ENCODE measurements at regions of chr9 and their contacts with region 1.

Region 1: GRCh38 chr9:35489313-35490154 is at the start of gene RUSC2:
- DNase-seq: peak; percentile 79
- H3K4me3 Mint-ChIP-seq: peak within 1 kb of the TSS; percentile 85
- H3K27ac Mint-ChIP-seq: no peak within 1 kb of the TSS
- H3K4me1 Mint-ChIP-seq: peaks cover 26% of the 10 kb centered on the region
- H3K27me3 Mint-ChIP-seq: no peaks in the 10 kb centered on the region
- total RNA-seq, gene RUSC2: 4.0 to 5.1 TPM

Region 2: GRCh38 chr9:35277628-35278359 is 211.7 kb before region 1 on chr9:
- CTCF ChIA-PET with region 1: no interaction called
- intact Hi-C with region 1: loop called (anchors 2 kb)
- DNase-seq: no peak
- H3K4me3 Mint-ChIP-seq: no peak overlapping the region
- H3K27ac Mint-ChIP-seq: no peak overlapping the region
- H3K4me1 Mint-ChIP-seq: peaks cover 30% of the 10 kb centered on the region
- H3K27me3 Mint-ChIP-seq: peaks cover 3% of the 10 kb centered on the region

Region 3: GRCh38 chr9:35385042-35385441 is 104.5 kb before region 1 on chr9:
- CTCF ChIA-PET with region 1: no interaction called
- intact Hi-C with region 1: no loop called
- DNase-seq: no peak
- H3K4me3 Mint-ChIP-seq: no peak overlapping the region
- H3K27ac Mint-ChIP-seq: no peak overlapping the region
- H3K4me1 Mint-ChIP-seq: no peaks in the 10 kb centered on the region
- H3K27me3 Mint-ChIP-seq: no peaks in the 10 kb centered on the region

Region 4: GRCh38 chr9:35553670-35554543 is 64.4 kb after region 1 on chr9:
- CTCF ChIA-PET with region 1: interaction called, 12 read pairs
- intact Hi-C with region 1: loop called (anchors 1 kb)
- DNase-seq: peak; percentile 71
- H3K4me3 Mint-ChIP-seq: no peak overlapping the region
- H3K27ac Mint-ChIP-seq: no peak overlapping the region
- H3K4me1 Mint-ChIP-seq: no peaks in the 10 kb centered on the region
- H3K27me3 Mint-ChIP-seq: no peaks in the 10 kb centered on the region

Region 5: DNA sequence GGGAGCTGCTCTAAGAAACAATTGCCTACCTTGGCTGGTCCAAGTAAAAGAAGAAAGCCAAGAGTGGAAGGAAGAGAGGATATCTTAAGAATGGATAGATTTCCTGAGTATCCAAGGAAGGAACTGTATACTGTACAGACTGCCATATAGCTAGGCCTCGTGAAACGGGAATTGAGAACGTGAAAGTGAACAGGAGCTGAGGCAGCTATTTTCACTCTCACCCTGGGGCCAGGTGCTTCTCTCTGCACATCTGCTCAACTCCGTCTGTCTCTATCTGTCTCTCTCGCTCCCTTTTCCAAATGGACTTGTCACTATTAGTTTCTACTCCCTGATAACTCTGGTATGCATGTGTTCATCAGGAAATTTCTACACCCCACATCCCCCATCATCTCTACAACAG is 79.7 kb after region 1 on chr9:
- CTCF ChIA-PET with region 1: no interaction called
- intact Hi-C with region 1: no loop called
- DNase-seq: no peak
- H3K4me3 Mint-ChIP-seq: no peak overlapping the region
- H3K27ac Mint-ChIP-seq: no peak overlapping the region
- H3K4me1 Mint-ChIP-seq: peaks cover 36% of the 10 kb centered on the region
- H3K27me3 Mint-ChIP-seq: no peaks in the 10 kb centered on the region

Measured in activated naive CD4-positive, alpha-beta T cell treated with anti-CD3 and anti-CD28 coated beads for 36 hours (primary cell).